Activated CD4-positive, alpha-beta memory T cell treated with anti-CD3 and anti-CD28 coated beads, Interleukin-2, amount 10 ng/mL, durations not matched to agents 7 days and 5 days (primary cell): ENCODE measurements at regions of chr7 and their contacts with region 1.

Region 1: DNA sequence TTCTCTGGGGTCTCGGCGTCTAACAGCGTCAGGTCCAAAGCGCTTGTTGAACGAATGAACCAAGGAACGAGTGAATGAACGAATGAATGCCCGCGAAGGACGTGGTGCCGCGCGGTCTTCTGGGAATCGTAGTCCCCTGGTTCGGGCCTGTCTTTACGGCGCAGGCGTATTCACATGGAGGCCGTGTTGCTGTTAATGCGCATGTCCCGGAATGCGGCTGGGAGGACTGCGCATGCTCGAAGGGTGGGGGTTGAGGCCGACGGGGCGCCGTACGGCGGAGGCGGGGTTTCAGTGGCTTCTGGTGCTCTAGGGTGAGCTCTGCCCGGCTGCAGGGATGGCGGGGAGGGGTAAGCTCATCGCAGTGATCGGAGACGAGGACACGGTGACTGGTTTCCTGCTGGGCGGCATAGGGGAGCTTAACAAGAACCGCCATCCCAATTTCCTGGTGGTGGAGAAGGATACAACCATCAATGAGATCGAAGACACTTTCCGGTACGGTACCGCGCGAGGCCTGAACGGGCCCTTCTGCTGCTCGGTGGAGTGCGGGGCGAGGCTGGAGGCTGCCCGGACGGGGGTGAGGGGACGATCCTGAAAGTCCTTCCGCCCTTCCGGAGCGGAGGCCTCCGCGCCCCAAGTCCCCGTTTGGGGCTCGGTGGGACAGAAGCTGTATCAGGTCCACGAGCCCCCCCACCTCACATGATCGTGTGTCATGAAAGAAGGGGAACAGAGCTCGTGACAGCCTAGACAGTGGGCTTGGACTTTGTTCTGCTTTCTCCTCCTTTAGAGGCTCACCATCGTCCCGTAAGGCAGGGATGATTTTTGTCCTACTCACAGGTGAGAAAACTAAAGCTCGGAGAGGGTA is at the start of gene ATP6V1F:
- DNase-seq: peak; percentile 100
- H3K4me3 Mint-ChIP-seq: peak within 1 kb of the TSS; percentile 94
- H3K27ac Mint-ChIP-seq: peak within 1 kb of the TSS; percentile 87
- H3K4me1 Mint-ChIP-seq: peaks cover 36% of the 10 kb centered on the region
- H3K27me3 Mint-ChIP-seq: peaks cover 2% of the 10 kb centered on the region
- total RNA-seq, gene ATP6V1F: 124 to 140 TPM

Region 2: DNA sequence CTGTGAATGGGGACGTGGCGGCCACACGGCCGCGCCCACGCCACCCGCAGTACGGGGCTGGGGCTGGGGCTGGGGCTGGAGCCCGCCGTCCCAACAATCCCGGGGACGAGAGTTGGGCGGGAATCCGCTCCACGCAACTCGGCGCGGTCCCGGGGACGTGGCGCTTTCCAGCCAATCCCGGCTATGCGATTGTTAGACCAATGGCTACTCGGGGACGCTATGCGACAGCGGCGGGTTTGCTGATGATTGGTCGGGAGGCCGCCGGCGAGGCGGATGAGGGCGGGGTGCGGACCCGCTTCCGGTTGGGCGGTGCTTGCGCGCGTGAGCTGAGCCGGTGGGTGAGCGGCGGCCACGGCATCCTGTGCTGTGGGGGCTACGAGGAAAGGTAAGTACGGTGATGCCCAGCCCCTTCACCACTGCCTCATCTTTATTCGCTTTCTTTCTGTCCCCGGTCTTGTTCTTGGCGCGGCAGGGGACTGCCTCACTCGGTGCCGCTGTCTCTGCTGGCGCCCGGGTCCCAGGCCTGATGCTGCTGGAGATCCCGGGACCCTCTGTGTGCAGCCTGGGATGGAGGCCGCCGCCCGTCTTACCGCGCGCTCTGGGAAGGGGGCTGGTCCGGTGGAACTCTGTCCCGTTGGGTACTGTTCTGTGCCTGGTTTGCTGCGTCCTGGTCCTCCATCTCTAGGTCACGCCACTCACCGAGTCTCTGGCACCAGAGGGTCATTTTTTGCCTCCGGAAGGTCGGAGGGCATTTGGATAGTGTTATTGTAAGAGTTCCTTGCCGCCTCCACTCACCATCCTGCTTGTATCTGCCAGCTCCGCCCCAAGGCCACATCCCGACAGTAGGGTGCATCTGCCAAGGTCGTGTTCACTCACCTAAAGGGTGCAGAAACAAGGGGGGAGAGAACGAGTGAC is 123.5 kb before region 1 on chr7 and contains the start of gene CALU:
- CTCF ChIA-PET with region 1: interaction called, 11 read pairs
- POLR2A ChIA-PET with region 1: interaction called, 10 read pairs
- DNase-seq: peak; percentile 96
- H3K4me3 Mint-ChIP-seq: peak within 1 kb of the TSS; percentile 99
- H3K27ac Mint-ChIP-seq: peak within 1 kb of the TSS; percentile 97
- H3K4me1 Mint-ChIP-seq: peaks cover 40% of the 10 kb centered on the region
- H3K27me3 Mint-ChIP-seq: peaks cover 5% of the 10 kb centered on the region
- total RNA-seq, gene CALU: 34.3 to 36.3 TPM

Region 3: GRCh38 chr7:128830231-128831177 is 32.3 kb before region 1 on chr7 and contains the start of gene FLNC:
- CTCF ChIA-PET with region 1: interaction called, 11 read pairs
- POLR2A ChIA-PET with region 1: no interaction called
- DNase-seq: peak; percentile 35
- H3K4me3 Mint-ChIP-seq: peak within 1 kb of the TSS; percentile 21
- H3K27ac Mint-ChIP-seq: no peak within 1 kb of the TSS
- H3K4me1 Mint-ChIP-seq: peaks cover 8% of the 10 kb centered on the region
- H3K27me3 Mint-ChIP-seq: peaks cover 38% of the 10 kb centered on the region
- total RNA-seq, gene FLNC: not detected

Region 4: DNA sequence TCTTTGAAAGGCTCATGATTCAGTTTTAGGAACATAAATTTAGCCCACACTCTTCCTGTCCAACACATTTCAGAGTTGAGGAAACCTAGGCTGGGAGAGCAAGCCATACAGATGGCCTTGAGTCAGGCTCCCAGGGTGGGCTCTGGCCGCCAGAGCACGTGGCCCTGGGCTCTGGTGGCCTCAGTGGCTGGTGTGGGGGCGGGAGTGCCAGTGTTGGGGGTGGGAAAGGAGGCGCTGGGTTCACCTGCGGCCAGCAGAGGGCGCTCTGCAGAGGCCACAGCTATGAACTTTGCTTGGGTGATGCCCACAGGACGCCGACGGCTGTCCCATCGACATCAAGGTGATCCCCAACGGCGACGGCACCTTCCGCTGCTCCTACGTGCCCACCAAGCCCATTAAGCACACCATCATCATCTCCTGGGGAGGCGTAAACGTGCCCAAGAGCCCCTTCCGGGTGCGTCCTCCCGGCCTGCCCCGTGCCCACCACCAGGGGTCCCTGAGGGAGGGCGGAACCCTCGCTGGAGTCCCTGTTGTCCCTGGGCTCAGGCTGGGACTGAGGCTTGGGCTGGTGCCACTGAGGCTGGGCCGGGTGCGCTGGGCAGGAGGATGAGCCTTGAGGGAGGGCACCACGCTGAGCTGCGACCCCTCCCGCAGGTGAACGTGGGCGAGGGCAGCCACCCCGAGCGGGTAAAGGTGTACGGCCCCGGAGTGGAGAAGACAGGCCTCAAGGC is 20.7 kb before region 1 on chr7:
- CTCF ChIA-PET with region 1: interaction called, 10 read pairs
- POLR2A ChIA-PET with region 1: no interaction called
- DNase-seq: peak; percentile 63
- H3K4me3 Mint-ChIP-seq: no peak overlapping the region
- H3K27ac Mint-ChIP-seq: no peak overlapping the region
- H3K4me1 Mint-ChIP-seq: no peaks in the 10 kb centered on the region
- H3K27me3 Mint-ChIP-seq: no peaks in the 10 kb centered on the region

Region 5: DNA sequence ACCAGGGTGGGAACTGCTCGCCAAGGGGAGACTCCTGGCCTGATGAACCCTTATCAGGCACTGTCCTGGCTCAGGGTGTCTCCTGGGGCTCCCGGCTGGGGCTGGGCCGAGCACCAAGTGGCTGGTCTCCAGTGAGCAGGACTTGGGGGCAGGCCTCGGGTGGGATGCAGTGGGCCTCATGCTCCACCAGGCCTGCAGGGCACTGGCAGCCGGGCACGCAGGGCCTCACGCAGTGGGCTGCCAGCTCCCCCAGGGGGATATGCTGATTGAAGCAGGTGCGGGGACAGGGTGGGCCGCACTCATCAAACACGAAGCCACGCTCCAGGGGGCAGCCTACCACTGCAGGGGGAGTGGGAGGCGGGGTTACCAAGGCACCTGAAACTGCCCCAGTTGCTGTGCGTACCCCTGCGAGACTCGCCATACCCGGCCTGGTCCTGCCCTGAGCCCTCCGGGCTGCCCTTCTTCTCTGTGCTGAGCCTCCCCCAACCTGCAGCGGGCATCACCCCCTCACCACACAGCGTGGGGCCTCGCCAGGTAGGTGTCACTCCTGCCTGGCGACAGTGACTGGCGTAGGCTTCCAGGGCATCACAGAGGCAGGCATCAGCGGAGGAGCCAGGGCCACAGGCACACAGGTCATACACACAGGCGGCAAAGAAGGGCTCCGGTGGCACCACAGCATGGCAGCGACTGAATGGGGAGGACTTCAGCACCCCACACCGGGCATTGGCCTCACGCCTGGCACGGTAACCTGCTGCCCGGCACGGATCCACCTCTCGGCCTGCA is 14.4 kb after region 1 on chr7:
- CTCF ChIA-PET with region 1: interaction called, 28 read pairs
- POLR2A ChIA-PET with region 1: interaction called, 6 read pairs
- DNase-seq: no peak
- H3K4me3 Mint-ChIP-seq: no peak overlapping the region
- H3K27ac Mint-ChIP-seq: no peak overlapping the region
- H3K4me1 Mint-ChIP-seq: peaks cover 8% of the 10 kb centered on the region
- H3K27me3 Mint-ChIP-seq: peaks cover 2% of the 10 kb centered on the region

Region 6: GRCh38 chr7:128883622-128884501 is 21.1 kb after region 1 on chr7:
- CTCF ChIA-PET with region 1: interaction called, 28 read pairs
- POLR2A ChIA-PET with region 1: interaction called, 11 read pairs
- DNase-seq: peak; percentile 84
- H3K4me3 Mint-ChIP-seq: no peak overlapping the region
- H3K27ac Mint-ChIP-seq: no peak overlapping the region
- H3K4me1 Mint-ChIP-seq: peaks cover 7% of the 10 kb centered on the region
- H3K27me3 Mint-ChIP-seq: peaks cover 3% of the 10 kb centered on the region

Region 7: GRCh38 chr7:129091484-129092002 is 228.7 kb after region 1 on chr7:
- CTCF ChIA-PET with region 1: interaction called, 10 read pairs
- POLR2A ChIA-PET with region 1: interaction called, 4 read pairs
- DNase-seq: peak; percentile 88
- H3K4me3 Mint-ChIP-seq: no peak overlapping the region
- H3K27ac Mint-ChIP-seq: no peak overlapping the region
- H3K4me1 Mint-ChIP-seq: peaks cover 33% of the 10 kb centered on the region
- H3K27me3 Mint-ChIP-seq: peaks cover 7% of the 10 kb centered on the region